ENCODE measurements at regions of chr17 and their contacts with region 1.

Region 1: DNA sequence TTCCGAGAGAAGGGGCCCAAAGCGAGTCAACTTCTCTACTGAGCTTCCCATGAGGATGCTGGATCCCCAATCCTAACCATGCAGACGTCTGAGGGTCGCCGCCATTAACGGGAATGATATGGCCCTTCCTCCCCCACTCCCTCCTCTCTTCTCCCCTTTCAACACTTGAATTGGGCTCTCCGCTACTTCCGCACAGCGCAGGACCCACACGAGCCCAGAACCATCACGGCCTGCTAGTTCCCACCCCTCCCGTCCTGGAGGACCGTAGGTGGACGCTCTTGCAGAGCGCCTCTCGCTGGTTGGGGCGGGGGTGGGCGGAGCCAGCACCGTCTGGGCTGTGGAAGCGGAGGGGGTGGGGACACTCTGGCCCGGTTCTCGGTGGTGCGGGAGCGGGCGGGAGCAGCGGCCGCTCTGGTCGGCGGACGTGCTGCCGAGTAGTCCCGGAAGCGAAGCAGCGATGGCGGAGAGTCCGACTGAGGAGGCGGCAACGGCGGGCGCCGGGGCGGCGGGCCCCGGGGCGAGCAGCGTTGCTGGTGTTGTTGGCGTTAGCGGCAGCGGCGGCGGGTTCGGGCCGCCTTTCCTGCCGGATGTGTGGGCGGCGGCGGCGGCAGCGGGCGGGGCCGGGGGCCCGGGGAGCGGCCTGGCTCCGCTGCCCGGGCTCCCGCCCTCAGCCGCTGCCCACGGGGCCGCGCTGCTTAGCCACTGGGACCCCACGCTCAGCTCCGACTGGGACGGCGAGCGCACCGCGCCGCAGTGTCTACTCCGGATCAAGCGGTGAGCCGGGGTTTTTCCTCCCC is at the start of gene UBE2Z:
- DNase-seq: peak; percentile 88 to 94
- H3K4me3 ChIP-seq: peak within 1 kb of the TSS; percentile 74 to 97 (median 80)
- H3K27ac ChIP-seq: peak within 1 kb of the TSS; percentile 89
- H3K4me1 ChIP-seq: peaks cover 5 to 17% (median 6%) of the 10 kb centered on the region in 4 experiments
- H3K27me3 ChIP-seq: no peaks in the 10 kb centered on the region
- CTCF ChIP-seq: peak; percentile 31 to 52 (median 39)
- EP300 ChIP-seq: no peak
- POLR2A ChIP-seq: peak; percentile 84 to 90
- RAD21 ChIP-seq: 0 out of 4 replicates have a peak, but pooled peaks of 1 of the 2 experiments have one; percentile 5
- total RNA-seq, gene UBE2Z: 75.3 and 75.9 TPM in 2 replicates

Region 2: DNA sequence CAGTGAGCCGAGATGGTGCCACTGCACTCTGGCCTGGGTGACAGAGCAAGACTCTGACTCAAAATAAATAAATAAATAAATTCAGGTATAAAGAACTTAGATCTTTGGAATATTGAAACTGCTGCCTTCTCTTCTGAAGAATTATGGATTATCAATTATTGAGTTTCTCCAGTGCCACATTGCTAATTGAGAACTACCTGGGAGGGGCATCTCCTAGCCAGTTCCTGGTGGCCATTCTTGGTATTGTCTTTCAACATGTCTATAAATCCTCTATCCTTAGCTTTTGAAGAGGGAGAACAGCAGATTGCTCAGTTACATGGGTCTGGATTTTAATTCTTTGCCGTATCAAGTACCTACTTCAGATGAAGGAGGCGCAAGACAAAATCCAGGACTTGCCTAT is 48.2 kb before region 1 on chr17:
- CTCF ChIA-PET with region 1: no interaction called
- POLR2A ChIA-PET with region 1: no interaction called
- DNase-seq: no peak
- H3K4me3 ChIP-seq: no peak overlapping the region
- H3K27ac ChIP-seq: no peak overlapping the region
- H3K4me1 ChIP-seq: no peaks in the 10 kb centered on the region
- H3K27me3 ChIP-seq: no peaks in the 10 kb centered on the region
- CTCF ChIP-seq: peak in 2 of 3 experiments; percentile 15 to 36; a peak in 2 of 4 replicates
- EP300 ChIP-seq: no peak
- POLR2A ChIP-seq: no peak
- RAD21 ChIP-seq: peak in 1 of 2 experiments; percentile 20; a peak in 1 of 4 replicates

Region 3: DNA sequence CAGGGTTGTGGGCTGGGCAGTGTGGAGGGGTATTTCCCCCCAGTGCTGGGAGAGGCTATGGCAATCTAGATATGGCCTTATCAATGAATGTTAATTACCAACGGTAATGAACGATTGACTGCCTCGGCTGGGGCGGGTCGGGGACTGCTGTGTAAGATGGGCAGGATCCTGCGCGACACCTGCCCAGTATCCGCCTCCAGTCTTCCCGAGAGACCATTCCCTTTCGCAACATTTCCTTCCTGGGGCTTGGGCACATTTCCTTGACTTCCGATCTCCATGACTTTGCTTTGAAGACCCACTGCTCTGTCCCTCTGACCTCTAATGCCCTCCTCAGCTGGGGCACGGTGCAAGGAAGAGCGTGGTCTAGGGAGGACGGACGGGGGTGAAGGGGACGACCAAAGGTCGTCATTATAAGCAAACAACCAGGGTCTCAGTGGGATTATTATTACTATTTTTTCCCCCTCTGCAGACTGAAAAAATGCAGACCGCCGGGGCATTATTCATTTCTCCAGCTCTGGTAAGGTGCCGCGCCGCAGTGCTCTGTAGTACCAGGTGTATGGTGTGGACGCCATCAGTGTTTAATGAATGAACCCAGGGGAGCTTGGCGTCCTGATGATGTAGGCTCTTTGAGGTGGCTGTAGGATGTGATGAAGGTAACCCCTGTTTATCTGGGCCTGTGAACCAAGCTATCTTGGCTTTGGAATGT is 15.2 kb before region 1 on chr17:
- CTCF ChIA-PET with region 1: interaction called, 16 read pairs
- POLR2A ChIA-PET with region 1: interaction called, 93 read pairs
- DNase-seq: no peak
- H3K4me3 ChIP-seq: peak overlapping the region; percentile 90 to 95 (median 94)
- H3K27ac ChIP-seq: peak overlapping the region; percentile 33; the same call in 1 of the 2 replicates
- H3K4me1 ChIP-seq: peaks cover 0 to 6% (median 3%) of the 10 kb centered on the region in 4 experiments; a peak in 3 of 7 replicates
- H3K27me3 ChIP-seq: no peaks in the 10 kb centered on the region
- CTCF ChIP-seq: no peak
- EP300 ChIP-seq: no peak
- POLR2A ChIP-seq: peak in 1 of 2 experiments; percentile 57; a peak in 1 of 3 replicates
- RAD21 ChIP-seq: no peak

Region 4: DNA sequence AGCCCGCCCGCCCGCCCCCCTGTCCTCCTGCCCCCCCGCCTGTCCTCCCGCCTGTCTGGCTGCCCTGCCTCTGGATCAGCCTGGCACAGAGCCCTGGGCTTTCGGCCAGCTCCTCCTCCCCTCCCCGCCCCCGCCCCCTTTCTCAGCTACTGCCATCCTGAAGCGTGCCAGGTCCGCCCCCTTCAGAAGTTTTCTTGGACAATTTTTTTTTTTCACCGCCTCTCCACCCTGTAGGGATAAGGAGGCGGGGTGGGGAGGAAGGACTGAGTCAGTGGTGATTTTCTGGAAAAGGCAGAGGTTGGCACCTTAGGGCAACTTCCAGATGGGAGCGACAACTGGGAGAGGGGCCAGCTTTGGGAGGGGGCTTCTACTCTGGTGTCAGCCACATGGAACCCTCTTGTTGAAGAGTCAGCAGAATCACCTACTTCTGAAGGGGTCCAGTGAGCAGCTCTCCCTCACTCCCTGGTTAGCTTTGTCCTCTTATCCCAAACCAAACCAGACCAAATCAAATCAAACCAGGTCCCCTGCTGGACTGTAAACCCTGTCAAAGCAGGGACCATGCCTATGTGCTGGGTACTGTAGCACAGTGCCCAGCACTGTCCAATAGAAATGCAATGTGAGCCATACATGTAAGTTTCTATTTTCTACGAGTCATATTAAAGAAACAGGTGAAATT is 108.7 kb after region 1 on chr17:
- CTCF ChIA-PET with region 1: interaction called, 3 read pairs
- POLR2A ChIA-PET with region 1: interaction called, 10 read pairs
- DNase-seq: peak in 1 of 2 experiments; percentile 46
- H3K4me3 ChIP-seq: no peak overlapping the region
- H3K27ac ChIP-seq: no peak overlapping the region
- H3K4me1 ChIP-seq: peaks cover 28 to 51% (median 40%) of the 10 kb centered on the region in 4 experiments
- H3K27me3 ChIP-seq: no peaks in the 10 kb centered on the region
- CTCF ChIP-seq: no peak
- EP300 ChIP-seq: no peak
- POLR2A ChIP-seq: no peak
- RAD21 ChIP-seq: no peak

Measured in H1 (cell line).